Ovary (tissue), 10 donors: ENCODE measurements at regions of chr18 and their contacts with region 1.

Region 1: GRCh38 chr18:35132021-35132902 is 91.0 kb downstream of the MAPRE2 start:
- DNase-seq: no peak
- H3K4me3 ChIP-seq: no peak overlapping the region
- H3K27ac ChIP-seq: no peak overlapping the region
- H3K4me1 ChIP-seq: no peaks in the 10 kb centered on the region
- H3K27me3 ChIP-seq: no peaks in the 10 kb centered on the region
- CTCF ChIP-seq: no peak
- EP300 ChIP-seq: no peak
- POLR2A ChIP-seq: no peak

Region 2: DNA sequence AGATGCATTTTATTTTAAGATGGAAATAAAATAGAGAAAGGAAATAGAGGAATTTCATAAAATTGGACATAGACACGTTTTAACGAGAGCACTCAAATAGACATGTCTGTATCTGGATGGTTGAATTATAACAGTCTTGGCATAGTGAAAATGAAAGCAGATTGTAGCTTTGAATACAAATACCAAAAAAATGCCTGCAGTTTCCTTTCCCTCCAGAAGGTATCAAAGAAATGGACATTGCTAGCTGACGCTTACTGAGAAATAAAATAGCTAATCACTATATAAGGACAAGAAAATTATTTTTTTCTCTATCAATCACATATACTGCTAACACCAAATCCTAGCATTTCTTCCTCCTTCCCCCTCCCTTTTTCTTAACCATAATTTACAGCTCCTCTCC is 102.5 kb before region 1 on chr18:
- intact Hi-C with region 1: loop called in 1 of 4 experiments (anchors 10 kb)
- DNase-seq: no peak
- H3K4me3 ChIP-seq: peak overlapping the region; percentile 1
- H3K27ac ChIP-seq: no peak overlapping the region
- H3K4me1 ChIP-seq: no peaks in the 10 kb centered on the region
- H3K27me3 ChIP-seq: no peaks in the 10 kb centered on the region
- CTCF ChIP-seq: no peak
- EP300 ChIP-seq: no peak
- POLR2A ChIP-seq: no peak

Region 3: GRCh38 chr18:35185771-35186170 is 53.5 kb after region 1 on chr18:
- intact Hi-C with region 1: no loop called
- DNase-seq: no peak
- H3K4me3 ChIP-seq: no peak overlapping the region
- H3K27ac ChIP-seq: no peak overlapping the region
- H3K4me1 ChIP-seq: no peaks in the 10 kb centered on the region
- H3K27me3 ChIP-seq: no peaks in the 10 kb centered on the region
- CTCF ChIP-seq: no peak
- EP300 ChIP-seq: no peak
- POLR2A ChIP-seq: no peak

Region 4: DNA sequence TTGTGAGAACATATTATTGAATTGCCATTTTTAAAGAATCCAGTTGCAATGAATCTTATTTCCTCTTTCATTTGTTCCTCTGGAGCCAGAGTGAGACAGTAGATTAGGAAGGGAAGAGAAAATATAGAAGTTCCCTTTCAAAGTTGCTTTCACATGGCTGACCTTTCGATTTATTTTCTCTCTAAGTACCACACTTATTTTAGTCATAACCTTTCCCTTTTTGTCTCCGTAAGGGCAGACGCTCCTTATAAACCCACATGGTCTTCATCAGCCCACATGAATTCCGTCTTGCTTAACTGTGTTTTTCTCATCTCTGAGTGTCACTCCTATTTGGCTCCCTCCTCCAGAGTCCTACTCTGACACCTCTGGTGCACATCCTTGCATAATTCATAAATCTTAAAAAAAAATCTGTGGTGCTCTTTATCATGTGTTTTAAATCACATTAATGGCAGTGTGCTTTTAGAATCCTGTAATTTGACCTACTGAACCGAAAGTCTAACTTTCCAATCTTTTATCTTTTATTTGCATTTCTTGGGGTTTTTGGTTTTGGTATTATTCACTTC is 283.3 kb after region 1 on chr18:
- intact Hi-C with region 1: no loop called
- DNase-seq: no peak
- H3K4me3 ChIP-seq: no peak overlapping the region
- H3K27ac ChIP-seq: no peak overlapping the region
- H3K4me1 ChIP-seq: no peaks in the 10 kb centered on the region
- H3K27me3 ChIP-seq: no peaks in the 10 kb centered on the region
- CTCF ChIP-seq: no peak
- EP300 ChIP-seq: no peak
- POLR2A ChIP-seq: no peak